Transverse colon (tissue), 4 donors: ENCODE measurements at regions of chr2 and their contacts with region 1.

Region 1: GRCh38 chr2:158142568-158143332 is 41.1 kb downstream of the UPP2 start:
- DNase-seq: no peak
- H3K4me3 ChIP-seq: no peak overlapping the region
- H3K27ac ChIP-seq: no peak overlapping the region
- H3K4me1 ChIP-seq: no peaks in the 10 kb centered on the region
- H3K27me3 ChIP-seq: no peaks in the 10 kb centered on the region
- CTCF ChIP-seq: no peak
- EP300 ChIP-seq: no peak
- POLR2A ChIP-seq: no peak

Region 2: GRCh38 chr2:158103411-158104012 is 39.2 kb before region 1 on chr2:
- in situ Hi-C with region 1: no loop called
- intact Hi-C with region 1: loop called (anchors 2 kb)
- DNase-seq: no peak
- H3K4me3 ChIP-seq: no peak overlapping the region
- H3K27ac ChIP-seq: no peak overlapping the region
- H3K4me1 ChIP-seq: peaks cover 0 to 14% (median 0%) of the 10 kb centered on the region in 4 donors
- H3K27me3 ChIP-seq: no peaks in the 10 kb centered on the region
- CTCF ChIP-seq: peak in 4 of 5 experiments; percentile 8 to 36 (median 20)
- EP300 ChIP-seq: no peak
- POLR2A ChIP-seq: no peak

Region 3: DNA sequence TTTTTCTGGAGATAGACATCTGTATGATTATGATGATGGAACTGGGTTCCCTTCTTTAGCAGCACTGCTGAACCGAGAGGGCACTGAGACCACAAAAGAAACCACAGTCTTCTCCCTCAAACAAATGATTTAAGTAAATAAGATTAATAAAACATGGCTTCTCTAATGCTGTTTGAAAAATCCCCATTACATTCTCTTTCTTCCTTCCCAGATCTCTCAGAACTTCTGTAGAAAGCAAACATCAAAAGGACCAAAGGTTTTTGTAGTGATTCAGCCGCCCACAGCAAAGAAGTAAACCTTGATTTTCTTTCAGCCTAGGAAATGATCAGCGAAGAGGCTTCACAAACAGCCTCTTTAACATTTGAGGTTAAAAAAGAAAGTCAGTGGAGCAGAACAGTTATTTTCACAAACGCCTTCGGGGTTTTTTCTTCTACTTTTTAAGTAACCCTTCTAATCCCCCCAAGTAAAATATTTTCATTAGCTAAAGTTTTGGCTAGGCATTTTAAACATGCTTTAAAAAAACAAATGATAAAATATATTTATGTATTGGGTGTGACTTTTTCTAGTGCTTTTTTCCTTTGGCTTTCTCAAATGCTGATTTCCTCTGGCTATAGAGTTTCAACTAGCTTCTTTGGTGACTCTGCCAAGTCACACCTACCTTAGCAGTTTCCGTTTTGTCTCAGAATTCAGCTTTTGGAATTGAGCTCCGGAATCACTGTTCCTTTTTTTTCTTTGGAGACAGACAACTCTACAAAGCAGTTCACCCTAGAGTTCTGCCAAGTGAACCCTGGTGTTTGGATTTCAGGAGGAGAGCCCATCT is 48.5 kb after region 1 on chr2:
- in situ Hi-C with region 1: no loop called
- intact Hi-C with region 1: no loop called
- DNase-seq: no peak
- H3K4me3 ChIP-seq: peak overlapping the region in 1 of 4 donors; percentile 26
- H3K27ac ChIP-seq: no peak overlapping the region
- H3K4me1 ChIP-seq: peaks cover 0 to 28% (median 6%) of the 10 kb centered on the region in 4 donors
- H3K27me3 ChIP-seq: no peaks in the 10 kb centered on the region
- CTCF ChIP-seq: no peak
- EP300 ChIP-seq: no peak
- POLR2A ChIP-seq: no peak

Region 4: DNA sequence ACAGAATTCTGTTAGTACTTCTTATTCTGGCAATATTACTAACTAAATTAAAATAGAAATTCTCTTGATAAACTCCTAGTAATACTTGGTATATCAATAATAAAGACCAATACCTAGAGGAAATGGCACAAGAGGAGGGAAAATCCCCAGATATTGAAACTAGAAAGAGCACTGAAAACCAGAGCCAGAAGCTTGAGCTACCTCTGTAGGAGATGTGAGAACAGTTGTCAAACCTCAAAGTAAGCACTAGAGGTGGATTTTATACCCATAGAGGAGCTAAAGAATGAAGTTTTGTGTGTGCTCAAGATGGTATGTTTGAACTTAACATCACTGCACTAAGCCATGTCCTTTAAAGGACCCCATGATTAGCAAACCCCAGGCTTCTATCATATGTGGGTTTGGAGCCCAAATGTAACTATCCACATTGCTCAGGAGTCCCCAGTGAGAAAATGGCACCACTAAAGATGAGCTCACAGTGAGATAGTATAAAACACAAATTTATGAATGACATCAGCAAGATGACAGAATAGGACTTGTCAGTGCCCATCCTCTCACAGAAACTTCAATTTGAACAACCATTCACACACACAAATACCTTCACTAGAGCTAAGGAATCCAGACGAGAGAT is 436.1 kb after region 1 on chr2:
- in situ Hi-C with region 1: no loop called
- intact Hi-C with region 1: no loop called
- DNase-seq: no peak
- H3K4me3 ChIP-seq: no peak overlapping the region
- H3K27ac ChIP-seq: no peak overlapping the region
- H3K4me1 ChIP-seq: no peaks in the 10 kb centered on the region
- H3K27me3 ChIP-seq: no peaks in the 10 kb centered on the region
- CTCF ChIP-seq: no peak
- EP300 ChIP-seq: no peak
- POLR2A ChIP-seq: no peak